ENCODE measurements at regions of chr3 and their contacts with region 1.

Region 1: GRCh38 chr3:12484198-12484974 is at the start of gene TSEN2:
- DNase-seq: peak; percentile 96
- H3K4me3 Mint-ChIP-seq: peak within 1 kb of the TSS; percentile 93
- H3K27ac Mint-ChIP-seq: peak within 1 kb of the TSS; percentile 91
- H3K4me1 Mint-ChIP-seq: peaks cover 38% of the 10 kb centered on the region
- H3K27me3 Mint-ChIP-seq: no peaks in the 10 kb centered on the region
- total RNA-seq, gene TSEN2: 23.6 and 28.5 TPM in 2 replicates

Region 2: DNA sequence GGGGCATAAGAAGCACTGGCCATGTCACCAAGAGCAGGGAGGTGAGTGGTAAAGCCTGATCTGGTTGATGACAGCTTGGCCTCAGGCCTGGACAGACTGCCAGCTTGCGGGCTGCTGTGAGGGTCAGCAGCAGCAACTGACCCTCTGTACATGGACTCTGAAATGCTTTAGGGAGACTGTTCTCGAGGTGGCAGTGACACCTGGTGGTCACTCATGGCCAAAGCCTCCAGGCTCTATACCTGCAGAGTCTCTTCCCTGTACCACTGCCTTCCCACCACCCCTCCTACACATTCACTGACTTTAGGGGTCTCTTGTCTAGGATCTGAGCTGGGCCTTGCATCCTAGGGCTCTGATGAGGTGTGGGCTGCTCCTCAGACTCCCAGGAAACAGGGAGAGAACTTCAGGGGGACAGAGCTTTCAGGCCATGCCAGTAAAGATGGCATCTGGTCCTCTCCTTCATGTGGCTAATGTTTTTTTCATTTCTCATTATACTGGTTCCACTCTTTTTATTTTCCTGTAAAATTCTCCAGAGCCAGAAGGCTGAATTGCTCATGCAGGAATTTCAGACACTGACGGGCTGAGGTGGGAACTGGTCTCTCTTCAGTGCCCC is 308.4 kb before region 1 on chr3:
- intact Hi-C with region 1: loop called (anchors 5 kb)
- DNase-seq: no peak
- H3K4me3 Mint-ChIP-seq: no peak overlapping the region
- H3K27ac Mint-ChIP-seq: no peak overlapping the region
- H3K4me1 Mint-ChIP-seq: peaks cover 21% of the 10 kb centered on the region
- H3K27me3 Mint-ChIP-seq: no peaks in the 10 kb centered on the region

Region 3: DNA sequence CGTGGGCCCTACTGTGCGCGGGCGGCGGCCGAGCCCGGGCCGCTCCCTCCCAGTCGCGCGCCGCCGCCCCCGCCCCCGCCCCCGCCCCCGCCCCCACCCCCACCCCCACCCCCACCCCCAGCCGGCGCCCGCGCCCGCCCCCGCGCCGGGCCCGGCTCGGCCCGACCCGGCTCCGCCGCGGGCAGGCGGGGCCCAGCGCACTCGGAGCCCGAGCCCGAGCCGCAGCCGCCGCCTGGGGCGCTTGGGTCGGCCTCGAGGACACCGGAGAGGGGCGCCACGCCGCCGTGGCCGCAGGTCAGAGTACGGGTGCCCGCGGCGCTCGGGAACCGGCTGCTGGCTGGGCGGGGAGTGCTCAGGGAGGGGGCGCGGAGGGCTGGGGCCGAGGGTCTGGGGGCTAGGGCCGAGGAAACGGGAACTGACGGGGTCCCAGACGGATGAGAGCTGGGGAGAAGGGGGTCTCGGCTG is 196.6 kb before region 1 on chr3:
- intact Hi-C with region 1: loop called (anchors 5 kb)
- DNase-seq: no peak
- H3K4me3 Mint-ChIP-seq: peak overlapping the region; percentile 76
- H3K27ac Mint-ChIP-seq: peak overlapping the region; percentile 42
- H3K4me1 Mint-ChIP-seq: peaks cover 18% of the 10 kb centered on the region
- H3K27me3 Mint-ChIP-seq: peaks cover 33% of the 10 kb centered on the region

Region 4: GRCh38 chr3:12395349-12396012 is 88.9 kb before region 1 on chr3:
- intact Hi-C with region 1: loop called (anchors 5 kb)
- DNase-seq: peak; percentile 11
- H3K4me3 Mint-ChIP-seq: peak overlapping the region; percentile 57
- H3K27ac Mint-ChIP-seq: peak overlapping the region; percentile 75
- H3K4me1 Mint-ChIP-seq: peaks cover 21% of the 10 kb centered on the region
- H3K27me3 Mint-ChIP-seq: peaks cover 15% of the 10 kb centered on the region

Region 5: GRCh38 chr3:12556671-12557472 is 72.5 kb after region 1 on chr3 and contains the start of gene MKRN2:
- intact Hi-C with region 1: loop called (anchors 2 kb)
- DNase-seq: peak; percentile 78
- H3K4me3 Mint-ChIP-seq: peak within 1 kb of the TSS; percentile 91
- H3K27ac Mint-ChIP-seq: peak within 1 kb of the TSS; percentile 80
- H3K4me1 Mint-ChIP-seq: peaks cover 38% of the 10 kb centered on the region
- H3K27me3 Mint-ChIP-seq: peaks cover 16% of the 10 kb centered on the region
- total RNA-seq, gene MKRN2: 21.9 and 24.7 TPM in 2 replicates

Region 6: GRCh38 chr3:12590096-12590495 is 105.7 kb after region 1 on chr3:
- intact Hi-C with region 1: no loop called
- DNase-seq: no peak
- H3K4me3 Mint-ChIP-seq: no peak overlapping the region
- H3K27ac Mint-ChIP-seq: no peak overlapping the region
- H3K4me1 Mint-ChIP-seq: peaks cover 3% of the 10 kb centered on the region
- H3K27me3 Mint-ChIP-seq: no peaks in the 10 kb centered on the region